Calu3 (cell line): ENCODE measurements at regions of chr17 and their contacts with region 1.

Region 1: DNA sequence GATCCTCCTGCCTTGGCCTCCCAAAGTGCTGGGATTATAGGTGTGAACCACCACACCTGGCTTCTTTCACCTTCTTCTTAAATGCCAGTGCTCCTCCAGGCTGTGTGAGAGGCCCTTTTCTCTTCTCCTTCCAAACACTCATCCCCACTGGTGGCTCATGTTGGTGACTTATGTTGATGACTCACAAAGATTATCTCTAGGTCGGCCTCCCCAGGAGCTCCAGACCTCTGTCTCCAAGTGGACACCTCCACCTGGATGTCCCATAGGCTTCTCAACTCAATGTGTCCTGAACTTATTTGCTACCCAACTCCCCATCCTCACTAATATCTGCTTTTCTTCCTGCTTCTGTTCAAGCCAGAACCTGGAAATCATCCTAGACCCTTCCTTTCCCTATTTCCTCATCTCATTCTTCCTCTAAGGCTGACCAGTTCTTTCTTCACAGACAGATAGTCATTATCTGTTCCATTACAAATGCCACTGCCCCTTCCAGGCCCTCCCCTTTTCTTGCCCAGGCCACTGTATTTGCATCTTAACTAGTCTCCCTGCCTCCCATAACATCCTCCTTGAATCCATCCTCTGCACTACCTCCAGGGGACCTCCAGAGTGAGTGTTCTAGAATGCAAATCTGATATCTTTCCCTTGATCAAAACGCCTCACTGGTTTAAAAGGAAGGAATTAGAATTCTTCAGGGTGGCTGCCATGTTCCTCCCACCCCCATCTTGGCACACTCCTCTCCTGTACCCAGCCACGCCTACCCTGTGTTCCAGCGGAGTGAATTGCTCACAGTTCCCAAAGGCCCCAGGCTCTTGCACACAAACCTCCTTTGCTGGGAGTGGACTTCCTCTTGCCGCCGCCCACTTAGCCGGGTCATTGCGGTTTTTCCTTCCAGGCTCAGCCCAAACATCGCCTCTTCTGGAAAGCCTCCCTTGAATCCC is 34.8 kb upstream of the FBXO47 start:
- DNase-seq: peak; percentile 93
- H3K4me3 Mint-ChIP-seq: peak overlapping the region; percentile 0
- H3K27ac Mint-ChIP-seq: no peak overlapping the region
- H3K4me1 Mint-ChIP-seq: peaks cover 25% of the 10 kb centered on the region
- H3K27me3 Mint-ChIP-seq: peaks cover 58% of the 10 kb centered on the region
- CTCF ChIP-seq: no peak

Region 2: GRCh38 chr17:39026980-39027451 is 25.0 kb after region 1 on chr17:
- CTCF ChIA-PET with region 1: no interaction called
- intact Hi-C with region 1: loop called (anchors 2 kb)
- DNase-seq: peak; percentile 83
- H3K4me3 Mint-ChIP-seq: peak overlapping the region; percentile 70
- H3K27ac Mint-ChIP-seq: no peak overlapping the region
- H3K4me1 Mint-ChIP-seq: peaks cover 7% of the 10 kb centered on the region
- H3K27me3 Mint-ChIP-seq: peaks cover 70% of the 10 kb centered on the region
- CTCF ChIP-seq: no peak